Ascending aorta (tissue), 2 donors: ENCODE measurements at regions of chr11 and their contacts with region 1.

Region 1: DNA sequence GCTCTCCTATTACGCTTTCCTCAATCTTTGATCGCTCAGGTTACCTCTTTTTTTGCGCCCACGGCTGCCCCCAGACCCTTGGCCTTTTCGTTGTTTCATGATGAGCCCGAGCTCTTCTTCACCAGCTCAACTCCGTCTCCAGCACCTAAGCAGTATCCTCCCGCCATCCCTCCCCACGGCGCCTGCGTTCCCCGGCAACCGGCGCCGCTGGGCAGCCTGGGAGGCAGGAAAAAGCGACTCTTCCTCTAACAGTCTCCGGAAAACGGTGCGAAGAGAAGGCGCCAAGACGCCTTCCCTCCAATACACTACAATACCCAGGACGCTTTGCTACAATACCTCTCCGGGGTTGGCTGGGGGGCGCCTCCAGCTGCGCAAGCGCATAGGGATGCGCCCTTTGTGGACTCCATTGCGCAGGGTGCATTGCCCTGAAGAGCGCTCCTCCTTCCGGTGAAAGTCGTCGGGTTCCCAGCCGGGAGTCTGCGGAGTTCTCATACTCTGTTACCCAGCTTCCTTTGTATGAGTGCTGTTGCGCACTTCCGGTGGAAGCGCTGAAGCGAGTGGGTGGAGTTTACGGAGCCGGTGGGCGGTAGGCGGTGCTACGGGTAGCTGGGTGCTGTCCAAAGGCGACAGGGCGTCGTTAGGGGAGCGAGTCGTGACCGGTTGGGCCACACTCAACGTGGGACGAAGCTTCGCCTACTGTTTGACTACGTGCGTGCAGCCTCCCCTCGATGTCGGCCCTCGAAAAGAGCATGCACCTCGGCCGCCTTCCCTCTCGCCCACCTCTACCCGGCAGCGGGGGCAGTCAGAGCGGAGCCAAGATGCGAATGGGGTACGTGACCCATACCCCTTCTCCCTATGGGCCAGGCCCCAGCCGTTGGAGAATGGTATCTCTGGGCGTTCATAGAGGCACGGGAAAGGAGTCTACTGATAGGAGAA is at the starts of genes C2CD3 and PPME1:
- DNase-seq: peak; percentile 98 to 100
- H3K4me3 ChIP-seq: peak within 1 kb of the TSS; percentile 90 to 96
- H3K27ac ChIP-seq: peak within 1 kb of the TSS; percentile 94
- H3K4me1 ChIP-seq: peaks cover 12 to 20% of the 10 kb centered on the region in 2 donors
- H3K27me3 ChIP-seq: no peaks in the 10 kb centered on the region
- CTCF ChIP-seq: peak in 2 of 3 experiments; percentile 20 to 25
- total RNA-seq, gene C2CD3: 11.4 TPM
- total RNA-seq, gene PPME1: 29.7 TPM

Region 2: GRCh38 chr11:73787643-73788537 is 383.1 kb before region 1 on chr11 and contains the start of gene MRPL48:
- intact Hi-C with region 1: loop called (anchors 10 kb)
- DNase-seq: peak; percentile 36 to 93
- H3K4me3 ChIP-seq: peak within 1 kb of the TSS; percentile 67 to 83
- H3K27ac ChIP-seq: peak within 1 kb of the TSS; percentile 71 to 83
- H3K4me1 ChIP-seq: peaks cover 0 to 12% of the 10 kb centered on the region in 2 donors
- H3K27me3 ChIP-seq: no peaks in the 10 kb centered on the region
- CTCF ChIP-seq: no peak
- total RNA-seq, gene MRPL48: not detected

Region 3: GRCh38 chr11:73982969-73983740 is 187.8 kb before region 1 on chr11:
- intact Hi-C with region 1: loop called (anchors 2 kb)
- DNase-seq: peak; percentile 82 to 97
- H3K4me3 ChIP-seq: peak overlapping the region; percentile 61 to 74
- H3K27ac ChIP-seq: peak overlapping the region; percentile 84 to 89
- H3K4me1 ChIP-seq: peaks cover 5 to 15% of the 10 kb centered on the region in 2 donors
- H3K27me3 ChIP-seq: no peaks in the 10 kb centered on the region
- CTCF ChIP-seq: no peak

Region 4: DNA sequence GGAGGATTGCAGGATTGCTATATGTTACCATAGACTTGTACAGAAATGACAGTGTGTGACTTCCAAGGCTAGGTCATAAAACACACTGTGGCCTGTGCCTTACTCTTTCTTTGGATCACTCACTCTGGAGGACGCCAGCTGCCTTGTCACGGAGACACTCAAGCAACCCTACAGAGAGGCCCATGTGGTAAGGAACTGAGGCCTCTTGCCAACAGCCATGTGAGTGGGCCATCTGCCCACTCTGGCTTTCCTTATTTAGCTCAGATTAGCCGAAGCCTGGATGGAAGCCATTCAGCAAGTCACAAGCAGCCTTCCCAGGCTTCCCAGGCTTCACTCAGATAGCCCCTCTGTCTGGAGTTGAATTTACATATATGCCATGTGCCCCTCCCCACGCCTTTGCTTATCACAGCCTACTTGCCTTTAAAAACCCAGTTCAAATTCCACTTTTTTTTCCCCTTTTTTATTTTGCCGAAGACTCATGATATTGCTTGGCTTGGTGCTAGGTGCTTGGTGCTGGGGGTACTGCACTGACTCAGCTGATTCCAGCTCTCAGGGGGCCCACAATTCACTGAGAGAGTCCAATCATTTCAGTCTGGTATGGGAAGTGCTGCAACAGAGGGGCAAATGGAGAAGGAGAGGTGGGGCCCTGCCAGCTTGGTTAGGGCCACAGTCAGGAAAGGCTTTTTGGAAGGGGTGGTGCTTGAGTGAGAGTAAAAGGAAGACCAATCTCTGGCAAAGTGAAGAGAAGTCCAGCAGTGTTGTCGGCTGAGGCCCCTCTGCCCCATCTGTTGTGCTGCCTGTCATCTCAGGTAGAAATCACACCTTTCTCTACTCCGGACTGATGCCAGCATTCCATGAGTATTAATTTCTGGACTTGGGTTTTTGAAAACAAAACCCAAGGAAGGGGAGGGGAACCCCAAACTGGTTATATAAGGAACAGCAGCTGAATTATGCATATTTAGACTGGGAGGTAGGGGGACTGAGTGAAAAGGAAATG is 155.0 kb after region 1 on chr11:
- intact Hi-C with region 1: no loop called
- DNase-seq: peak; percentile 86 to 95
- H3K4me3 ChIP-seq: no peak overlapping the region
- H3K27ac ChIP-seq: peak overlapping the region; percentile 70 to 71
- H3K4me1 ChIP-seq: peaks cover 10 to 42% of the 10 kb centered on the region in 2 donors
- H3K27me3 ChIP-seq: no peaks in the 10 kb centered on the region
- CTCF ChIP-seq: no peak

Region 5: GRCh38 chr11:74398244-74399159 is 227.5 kb after region 1 on chr11 and contains the start of gene PGM2L1:
- intact Hi-C with region 1: loop called (anchors 2 kb)
- DNase-seq: peak; percentile 86 to 97
- H3K4me3 ChIP-seq: peak within 1 kb of the TSS; percentile 92 to 95
- H3K27ac ChIP-seq: peak within 1 kb of the TSS; percentile 83 to 86
- H3K4me1 ChIP-seq: no peaks in the 10 kb centered on the region
- H3K27me3 ChIP-seq: no peaks in the 10 kb centered on the region
- CTCF ChIP-seq: no peak
- total RNA-seq, gene PGM2L1: 8.4 TPM

Region 6: GRCh38 chr11:74948898-74949747 is 778.2 kb after region 1 on chr11 and contains the starts of genes SPCS2 and XRRA1:
- intact Hi-C with region 1: loop called (anchors 5 kb)
- DNase-seq: peak; percentile 96 to 99
- H3K4me3 ChIP-seq: peak within 1 kb of the TSS; percentile 64 to 90
- H3K27ac ChIP-seq: peak within 1 kb of the TSS; percentile 62 to 85
- H3K4me1 ChIP-seq: peaks cover 6 to 17% of the 10 kb centered on the region in 2 donors
- H3K27me3 ChIP-seq: no peaks in the 10 kb centered on the region
- CTCF ChIP-seq: no peak
- total RNA-seq, gene SPCS2: 13.0 TPM
- total RNA-seq, gene XRRA1: 11.4 TPM